ENCODE measurements at regions of chr20 and their contacts with region 1.

Region 1: DNA sequence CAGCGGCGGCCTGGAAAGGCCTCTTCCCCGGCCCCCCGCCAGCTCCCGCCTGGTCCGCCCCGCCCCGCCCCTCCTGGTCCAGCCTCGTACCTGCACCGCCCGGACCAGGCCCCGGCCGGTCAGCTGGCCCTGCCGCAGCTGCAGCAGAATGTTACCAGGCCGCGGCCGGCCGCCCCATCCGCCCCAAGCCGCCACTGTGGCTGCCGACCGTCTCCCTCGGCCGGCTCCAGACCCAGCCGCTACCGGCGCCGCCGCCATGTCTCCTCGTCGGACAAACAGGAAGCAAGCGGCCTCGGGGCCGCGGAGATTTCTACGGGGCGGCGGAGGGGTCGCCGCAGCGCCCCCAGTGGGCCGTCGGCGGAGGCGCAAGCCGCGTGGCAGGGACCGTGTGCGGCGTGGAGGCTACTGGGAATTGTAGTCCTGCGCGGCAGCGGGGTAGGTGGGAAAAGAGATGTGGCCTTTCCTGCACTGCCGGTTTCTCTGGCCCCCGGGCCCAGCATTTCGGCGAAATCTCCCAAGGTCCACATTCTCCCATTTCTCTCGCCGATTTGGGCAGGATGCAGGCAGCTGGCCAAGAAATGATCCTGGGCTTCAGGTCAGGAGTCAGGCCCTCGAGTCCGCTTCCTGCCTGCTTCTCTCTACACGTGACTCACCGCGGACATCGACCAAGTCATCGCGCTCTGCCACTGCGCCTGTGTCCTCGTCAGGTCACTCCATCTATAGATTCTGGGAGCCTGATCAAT is at the start of gene TRPC4AP:
- DNase-seq: peak; percentile 94 to 96
- ATAC-seq: peak; percentile 98
- H3K4me3 ChIP-seq: peak within 1 kb of the TSS; percentile 90 to 97
- H3K27ac ChIP-seq: peak within 1 kb of the TSS; percentile 43 to 97
- H3K4me1 ChIP-seq: no peaks in the 10 kb centered on the region
- H3K27me3 ChIP-seq: no peaks in the 10 kb centered on the region
- total RNA-seq, gene TRPC4AP: 53.4 to 58.3 TPM

Region 2: GRCh38 chr20:34834459-34834893 is 258.2 kb before region 1 on chr20:
- intact Hi-C with region 1: loop called (anchors 10 kb)
- DNase-seq: no peak
- ATAC-seq: no peak
- H3K4me3 ChIP-seq: no peak overlapping the region
- H3K27ac ChIP-seq: no peak overlapping the region
- H3K4me1 ChIP-seq: no peaks in the 10 kb centered on the region
- H3K27me3 ChIP-seq: no peaks in the 10 kb centered on the region

Region 3: DNA sequence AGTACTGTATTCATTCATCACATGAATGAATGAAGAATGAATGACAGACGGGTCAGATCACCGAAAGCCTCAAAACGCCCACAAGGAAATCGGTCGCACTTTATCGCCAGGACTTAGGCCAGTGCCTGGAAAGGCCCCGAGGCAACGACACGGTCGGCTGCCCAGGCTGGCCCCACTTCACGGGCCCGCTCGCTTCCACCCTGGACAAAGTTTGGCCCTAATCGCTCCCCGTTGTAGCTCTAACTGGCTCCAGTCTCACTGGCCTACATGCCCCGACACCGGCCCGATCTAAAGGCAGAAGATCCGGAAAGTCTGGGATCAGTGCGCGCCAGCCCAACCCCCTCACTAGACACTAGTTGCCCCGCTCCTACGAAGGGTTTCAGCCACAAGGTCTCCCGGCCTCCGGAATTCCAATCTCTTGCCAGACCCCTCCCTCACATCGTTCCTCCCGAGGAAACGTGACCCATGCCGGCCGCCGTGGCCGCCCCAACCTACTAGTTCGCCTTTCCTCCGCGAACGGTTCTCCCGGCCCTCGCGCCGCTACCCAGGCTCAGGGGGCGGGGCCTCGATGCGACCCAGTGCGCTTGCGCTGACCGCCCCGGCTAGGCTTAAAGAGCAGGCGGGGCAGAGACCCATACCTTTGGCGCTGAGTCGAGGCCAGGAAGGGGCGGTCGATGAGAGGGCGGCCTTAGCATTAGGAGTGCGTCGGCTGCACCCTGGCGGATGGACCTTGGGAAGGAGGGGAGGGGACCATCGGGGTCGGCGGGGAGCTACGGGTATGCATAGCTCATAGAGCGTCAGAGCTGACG is 137.3 kb before region 1 on chr20 and contains the starts of genes GSS and MYH7B:
- intact Hi-C with region 1: loop called in 1 of 2 experiments (anchors 5 kb)
- DNase-seq: peak; percentile 99 to 100
- ATAC-seq: peak; percentile 98
- H3K4me3 ChIP-seq: peak within 1 kb of the TSS; percentile 21 to 37
- H3K27ac ChIP-seq: peak within 1 kb of the TSS in 1 of 2 donors; percentile 62
- H3K4me1 ChIP-seq: no peaks in the 10 kb centered on the region
- H3K27me3 ChIP-seq: no peaks in the 10 kb centered on the region
- total RNA-seq, gene GSS: 22.9 to 24.3 TPM
- total RNA-seq, gene MYH7B: 0.57 to 0.88 TPM

Region 4: DNA sequence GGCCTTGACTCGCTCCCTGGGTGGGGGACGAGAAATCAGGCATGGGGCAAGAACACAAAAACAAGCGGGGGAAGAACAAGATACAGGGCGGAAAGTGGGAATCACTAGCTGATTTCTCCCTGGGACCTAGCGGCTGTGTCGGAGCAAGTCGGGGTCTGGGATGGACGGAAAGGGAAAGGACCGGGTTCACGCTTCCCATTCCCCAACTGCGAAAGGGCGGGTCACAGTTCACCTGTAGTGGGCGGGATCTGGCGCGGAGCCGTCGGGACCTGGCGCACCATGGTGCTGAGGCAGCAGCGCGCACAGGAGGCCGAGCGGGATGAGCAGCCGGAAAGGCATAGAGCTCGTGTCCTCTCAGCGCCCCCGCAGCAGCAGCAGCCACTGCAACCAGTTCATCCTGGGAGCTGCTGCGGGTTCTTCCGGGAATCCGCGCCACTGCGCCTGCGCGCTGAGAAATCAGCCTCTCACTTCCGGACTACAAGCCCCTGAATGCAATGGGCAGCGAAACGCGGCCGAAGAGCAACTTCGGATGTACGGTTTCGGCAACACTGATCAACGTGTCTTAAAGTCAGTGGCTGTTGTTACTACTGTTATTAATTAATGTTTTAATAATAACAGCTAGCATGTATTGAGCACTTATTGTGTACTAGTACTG is 54.4 kb after region 1 on chr20 and contains the start of gene EDEM2:
- intact Hi-C with region 1: loop called in 1 of 2 experiments (anchors 5 kb)
- DNase-seq: peak; percentile 96 to 99
- ATAC-seq: peak; percentile 96
- H3K4me3 ChIP-seq: peak within 1 kb of the TSS; percentile 45 to 49
- H3K27ac ChIP-seq: peak within 1 kb of the TSS in 1 of 2 donors; percentile 10
- H3K4me1 ChIP-seq: no peaks in the 10 kb centered on the region
- H3K27me3 ChIP-seq: no peaks in the 10 kb centered on the region
- total RNA-seq, gene EDEM2: 21.6 to 23.4 TPM

Region 5: GRCh38 chr20:35277531-35278395 is 185.1 kb after region 1 on chr20 and contains the start of gene MMP24OS:
- intact Hi-C with region 1: loop called in 1 of 2 experiments (anchors 10 kb)
- DNase-seq: peak; percentile 95 to 96
- ATAC-seq: peak; percentile 96
- H3K4me3 ChIP-seq: peak within 1 kb of the TSS; percentile 54 to 65
- H3K27ac ChIP-seq: peak within 1 kb of the TSS; percentile 51 to 93
- H3K4me1 ChIP-seq: no peaks in the 10 kb centered on the region
- H3K27me3 ChIP-seq: no peaks in the 10 kb centered on the region
- total RNA-seq, gene MMP24OS: 58.6 to 79.2 TPM

Measured in aorta (tissue), 5 donors.